Motor neuron (in vitro differentiated cells): ENCODE measurements at regions of chr11 and their contacts with region 1.

Region 1: GRCh38 chr11:85595285-85595884 is 31.8 kb downstream of the DLG2 start:
- ATAC-seq: peak in 4 of 8 experiments; percentile 32 to 68 (median 56)
- H3K4me3 ChIP-seq: no peak overlapping the region
- H3K27ac ChIP-seq: no peak overlapping the region
- H3K4me1 ChIP-seq: no peaks in the 10 kb centered on the region

Region 2: GRCh38 chr11:84800755-84801346 is 794.5 kb before region 1 on chr11:
- in situ Hi-C with region 1: loop called in 3 of 9 experiments (anchors 25 kb)
- ATAC-seq: peak in 3 of 8 experiments; percentile 62 to 66 (median 64)
- H3K4me3 ChIP-seq: no peak overlapping the region
- H3K27ac ChIP-seq: no peak overlapping the region
- H3K4me1 ChIP-seq: no peaks in the 10 kb centered on the region